ENCODE measurements at regions of chr17 and their contacts with region 1.

Region 1: GRCh38 chr17:7561028-7561575 is 617 bp upstream of the SENP3 start:
- DNase-seq: peak; percentile 94
- ATAC-seq: peak; percentile 72

Region 2: GRCh38 chr17:7252176-7253043 is 308.7 kb before region 1 on chr17 and contains the start of gene ELP5:
- intact Hi-C with region 1: loop called (anchors 10 kb)
- DNase-seq: peak; percentile 97
- ATAC-seq: peak; percentile 78
- total RNA-seq, gene ELP5: 72.7 TPM

Region 3: DNA sequence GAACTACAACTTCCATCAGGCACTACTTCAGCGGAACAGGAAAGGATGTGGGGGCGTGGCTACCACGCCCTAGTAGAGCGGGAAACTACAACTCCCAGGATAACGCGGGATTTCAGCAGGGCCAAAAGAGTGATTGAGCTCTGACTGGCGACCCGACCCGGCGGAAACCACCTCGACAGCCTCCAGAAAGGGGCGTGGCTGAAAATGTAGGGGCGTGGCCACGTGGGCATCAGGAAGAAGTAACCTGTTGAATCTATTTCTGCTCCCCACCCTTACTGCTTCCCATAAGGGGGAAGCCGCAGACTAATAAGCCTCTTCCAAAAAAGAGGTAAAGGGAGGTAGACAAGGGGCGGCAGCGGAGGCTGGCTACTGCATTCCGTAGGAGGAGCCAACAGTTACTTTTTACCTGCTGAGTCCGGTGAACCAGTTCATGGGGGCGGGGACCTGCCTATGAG is 125.9 kb before region 1 on chr17 and contains the start of gene TMEM102:
- intact Hi-C with region 1: loop called (anchors 2 kb)
- DNase-seq: peak; percentile 95
- ATAC-seq: peak; percentile 86
- total RNA-seq, gene TMEM102: 2.7 TPM

Region 4: DNA sequence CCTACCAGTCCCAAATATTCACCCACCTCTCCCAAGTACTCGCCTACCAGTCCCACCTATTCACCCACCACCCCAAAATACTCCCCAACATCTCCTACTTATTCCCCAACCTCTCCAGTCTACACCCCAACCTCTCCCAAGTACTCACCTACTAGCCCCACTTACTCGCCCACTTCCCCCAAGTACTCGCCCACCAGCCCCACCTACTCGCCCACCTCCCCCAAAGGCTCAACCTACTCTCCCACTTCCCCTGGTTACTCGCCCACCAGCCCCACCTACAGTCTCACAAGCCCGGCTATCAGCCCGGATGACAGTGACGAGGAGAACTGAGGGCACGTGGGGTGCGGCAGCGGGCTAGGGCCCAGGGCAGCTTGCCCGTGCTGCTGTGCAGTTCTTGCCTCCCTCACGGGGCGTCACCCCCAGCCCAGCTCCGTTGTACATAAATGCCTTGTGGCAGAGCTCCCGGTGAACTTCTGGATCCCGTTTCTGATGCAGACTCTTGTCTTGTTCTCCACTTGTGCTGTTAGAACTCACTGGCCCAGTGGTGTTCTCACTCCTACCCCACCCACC is 47.2 kb before region 1 on chr17:
- intact Hi-C with region 1: loop called (anchors 1 kb)
- DNase-seq: no peak
- ATAC-seq: no peak

Region 5: GRCh38 chr17:7548585-7549400 is 12.3 kb before region 1 on chr17 and contains the start of gene TNFSF12:
- intact Hi-C with region 1: loop called (anchors 1 kb)
- DNase-seq: peak; percentile 89
- ATAC-seq: peak; percentile 84
- total RNA-seq, gene TNFSF12: 41.7 TPM